ENCODE measurements at regions of chr12 and their contacts with region 1.

Region 1: DNA sequence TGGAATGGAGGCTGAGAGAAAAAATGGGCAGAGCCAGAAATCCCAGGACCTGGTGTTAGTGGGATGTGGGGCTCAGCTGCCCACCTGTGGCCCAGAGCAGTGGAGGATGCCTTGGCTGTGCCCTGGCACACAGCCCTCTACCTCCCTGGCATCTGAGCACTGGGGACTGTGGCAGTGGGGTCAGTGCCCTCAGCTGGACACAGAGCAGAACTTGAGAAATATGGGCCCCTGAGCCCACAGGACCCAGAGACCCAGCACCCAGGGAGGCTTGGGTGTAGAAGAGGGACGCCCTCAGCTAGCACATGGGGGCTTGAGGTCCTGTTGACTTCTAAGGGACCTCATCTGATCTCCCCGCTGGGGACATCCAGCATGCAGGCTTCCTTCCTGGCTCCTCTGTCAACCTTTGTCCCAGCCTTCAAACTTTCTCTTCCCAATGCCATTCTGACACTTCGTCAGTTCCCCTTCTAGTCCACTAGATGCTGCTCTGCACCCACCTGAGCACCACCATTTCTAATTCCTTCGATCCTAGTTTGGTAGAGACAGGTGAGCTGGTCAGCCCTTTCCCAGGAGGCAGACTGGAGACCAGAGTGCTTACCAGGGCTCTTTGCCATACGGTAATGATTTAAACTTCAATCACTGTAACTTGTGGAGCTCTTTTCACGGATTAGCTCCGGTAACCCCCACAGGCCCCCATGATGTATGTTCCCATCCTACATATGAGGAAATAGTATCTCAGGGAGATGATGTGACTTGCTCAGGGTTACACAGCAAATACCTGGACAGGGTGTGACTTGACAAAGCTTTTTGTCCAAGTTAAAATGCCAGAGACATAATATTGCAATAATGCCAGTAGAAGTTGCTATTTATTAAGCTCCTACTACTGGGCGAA is 143.7 kb downstream of the ASCL4 start:
- H3K4me3 ChIP-seq: no peak overlapping the region
- H3K27ac ChIP-seq: no peak overlapping the region
- H3K4me1 ChIP-seq: no peaks in the 10 kb centered on the region
- CTCF ChIP-seq: peak; percentile 85

Region 2: DNA sequence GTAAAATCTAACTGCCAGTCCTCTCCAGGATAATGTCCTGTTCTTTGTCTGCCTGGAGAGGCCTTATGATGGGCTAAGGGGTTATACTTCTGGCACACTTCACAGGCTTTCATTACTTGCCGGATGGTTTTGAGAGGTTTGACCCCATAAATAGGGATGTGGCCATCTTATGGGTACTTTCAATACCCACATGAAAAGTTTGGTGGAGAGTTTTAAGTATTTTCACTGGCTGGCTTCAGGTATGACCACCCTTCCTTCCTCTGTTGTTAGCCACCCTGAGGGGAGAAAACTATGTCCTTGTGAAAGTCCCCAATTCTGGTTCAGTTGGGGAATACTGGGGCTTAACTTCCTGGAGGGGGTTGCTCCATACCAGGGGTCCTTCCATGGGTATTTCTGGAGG is 88.9 kb before region 1 on chr12:
- CTCF ChIA-PET with region 1: no interaction called
- POLR2A ChIA-PET with region 1: no interaction called
- H3K4me3 ChIP-seq: no peak overlapping the region
- H3K27ac ChIP-seq: no peak overlapping the region
- H3K4me1 ChIP-seq: no peaks in the 10 kb centered on the region
- CTCF ChIP-seq: no peak

Region 3: DNA sequence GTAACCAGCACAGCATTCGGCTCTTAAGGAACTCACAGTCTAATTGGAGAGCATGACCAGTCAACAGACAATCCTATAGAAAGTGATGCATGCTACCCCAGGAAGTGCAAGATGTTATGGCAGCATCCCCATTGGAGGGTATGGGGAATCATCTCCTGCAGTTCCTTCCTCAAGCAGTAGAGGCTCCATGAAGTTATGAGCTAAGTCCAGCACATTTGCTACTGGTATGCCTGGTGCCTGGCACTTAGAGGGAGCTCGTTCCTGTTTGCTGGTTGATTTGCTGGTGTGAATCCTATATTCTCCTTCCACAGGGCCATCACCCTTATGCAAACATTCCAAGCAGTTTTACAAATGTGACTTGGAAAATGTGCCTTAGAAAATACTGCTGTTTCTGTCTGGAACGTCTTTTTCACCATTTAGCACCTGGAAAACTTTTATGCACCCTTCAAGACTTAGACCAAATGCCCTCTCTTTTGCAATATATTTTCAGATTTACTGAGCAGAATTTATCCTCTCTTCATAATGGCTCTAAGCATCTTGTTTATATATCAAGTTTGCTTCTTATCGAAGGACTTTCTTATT is 74.8 kb after region 1 on chr12:
- CTCF ChIA-PET with region 1: interaction called, 11 read pairs
- POLR2A ChIA-PET with region 1: no interaction called
- H3K4me3 ChIP-seq: no peak overlapping the region
- H3K27ac ChIP-seq: no peak overlapping the region
- H3K4me1 ChIP-seq: no peaks in the 10 kb centered on the region
- CTCF ChIP-seq: peak; percentile 11; the same call in 1 of the 2 replicates